B cell (primary cell): ENCODE measurements at regions of chr19 and their contacts with region 1.

Region 1: DNA sequence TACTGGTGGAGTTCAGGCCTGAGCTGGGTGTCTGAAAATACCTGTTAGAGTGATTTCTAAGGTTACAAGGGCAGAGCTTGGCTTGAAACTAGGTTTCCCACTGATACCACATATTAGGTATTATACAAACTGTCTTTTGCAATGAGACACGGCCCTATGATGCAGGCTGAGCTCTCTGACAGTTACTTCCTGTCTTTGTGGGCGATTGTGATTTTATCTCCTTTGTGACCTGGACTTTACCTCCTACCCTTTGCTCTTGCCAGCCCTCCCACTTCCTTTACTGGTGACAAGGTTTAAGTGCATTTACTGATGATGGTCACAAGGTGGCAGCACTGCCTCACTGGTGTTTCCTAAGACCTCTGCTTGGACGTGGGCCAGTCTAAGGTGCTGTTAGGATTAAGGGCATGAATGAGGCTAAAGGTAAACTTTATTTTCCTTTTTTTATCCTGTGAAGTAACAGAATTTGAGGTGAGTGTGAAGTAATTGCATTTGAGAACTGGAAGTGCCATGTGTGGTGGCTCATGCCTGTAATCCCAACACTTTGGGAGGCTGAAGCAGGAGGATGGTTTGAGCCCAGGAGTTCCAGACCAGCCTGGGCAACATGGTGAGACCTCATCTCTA is 7.7 kb upstream of the CXCL17 start:
- DNase-seq: peak; percentile 89
- ATAC-seq: peak; percentile 99
- H3K4me3 ChIP-seq: no peak overlapping the region
- H3K4me3 Mint-ChIP-seq: no peak overlapping the region
- H3K27ac ChIP-seq: no peak overlapping the region
- H3K27ac Mint-ChIP-seq: no peak overlapping the region
- H3K4me1 ChIP-seq: peaks cover 18 to 20% of the 10 kb centered on the region in 2 donors
- H3K4me1 Mint-ChIP-seq: peaks cover 12% of the 10 kb centered on the region
- H3K27me3 ChIP-seq: peaks cover 0 to 3% (median 0%) of the 10 kb centered on the region in 4 experiments
- H3K27me3 Mint-ChIP-seq: peaks cover 6% of the 10 kb centered on the region
- CTCF ChIP-seq: peak; percentile 95

Region 2: DNA sequence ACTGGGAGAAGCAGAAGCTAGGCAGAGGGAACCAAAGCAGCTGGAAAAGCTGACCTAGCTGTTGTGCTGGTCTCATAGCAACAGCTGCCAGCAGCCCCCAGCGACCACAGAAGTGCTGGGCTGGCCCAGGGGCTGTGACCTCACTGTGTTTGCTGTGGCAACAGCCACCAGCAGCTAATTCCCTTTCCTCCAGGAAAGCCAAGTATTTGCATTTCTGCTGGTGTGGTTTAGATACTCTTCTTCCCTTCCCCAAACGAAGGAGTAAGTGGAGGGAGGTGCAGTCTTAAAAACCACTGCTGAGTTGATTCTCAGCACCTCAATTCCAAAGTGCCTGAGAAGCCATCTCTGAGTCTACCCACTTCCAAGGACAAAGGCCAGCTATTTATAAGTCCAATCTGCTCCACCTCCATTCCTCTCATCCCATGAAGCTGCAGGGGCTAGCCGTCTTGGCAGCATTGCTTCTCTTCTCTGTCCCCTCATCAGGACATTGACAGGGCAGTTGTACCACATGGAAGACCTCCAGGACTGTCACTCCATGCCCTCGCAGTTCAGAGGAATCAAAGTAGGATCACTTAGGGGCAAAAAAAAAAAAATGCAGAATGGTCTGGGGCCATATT is 1152.0 kb before region 1 on chr19:
- CTCF ChIA-PET with region 1: no interaction called
- POLR2A ChIA-PET with region 1: no interaction called
- intact Hi-C with region 1: no loop called
- DNase-seq: peak; percentile 85
- ATAC-seq: peak; percentile 25
- H3K4me3 ChIP-seq: no peak overlapping the region
- H3K4me3 Mint-ChIP-seq: peak overlapping the region; percentile 86
- H3K27ac ChIP-seq: peak overlapping the region; percentile 83 to 100
- H3K27ac Mint-ChIP-seq: peak overlapping the region; percentile 98
- H3K4me1 ChIP-seq: peaks cover 58 to 65% of the 10 kb centered on the region in 2 donors
- H3K4me1 Mint-ChIP-seq: peaks cover 71% of the 10 kb centered on the region
- H3K27me3 ChIP-seq: no peaks in the 10 kb centered on the region
- H3K27me3 Mint-ChIP-seq: no peaks in the 10 kb centered on the region
- CTCF ChIP-seq: no peak

Region 3: DNA sequence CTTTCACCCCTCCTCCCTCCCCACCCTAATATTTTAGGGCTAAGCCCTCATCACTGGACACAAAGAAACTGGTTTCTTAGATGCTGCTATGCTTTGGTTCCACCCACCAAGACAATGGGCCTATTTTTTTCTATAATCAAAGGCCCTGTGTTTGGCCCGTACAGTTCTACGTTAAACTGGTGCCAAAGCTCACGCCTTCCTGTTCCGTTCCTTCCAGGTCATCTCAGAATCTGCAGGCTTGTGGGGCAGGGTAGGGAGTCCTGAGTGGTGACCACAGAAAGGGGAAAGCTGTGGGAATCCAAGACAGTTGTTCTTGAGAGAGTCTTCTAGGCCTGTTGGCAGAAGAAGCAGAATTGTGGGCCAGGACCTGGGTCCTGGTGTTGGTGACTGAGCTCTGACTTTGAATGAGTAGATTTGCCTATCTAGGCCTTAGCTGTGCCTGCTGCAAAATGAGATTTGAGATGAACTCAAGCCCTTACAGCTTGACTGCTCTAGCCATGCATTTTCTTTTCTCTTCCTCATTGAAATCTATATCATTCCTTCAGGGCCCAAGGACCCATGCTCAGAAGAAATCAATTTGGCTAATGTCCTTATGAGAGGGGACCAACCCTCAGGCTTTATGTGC is 11.4 kb after region 1 on chr19:
- CTCF ChIA-PET with region 1: interaction called, 57 read pairs
- POLR2A ChIA-PET with region 1: no interaction called
- intact Hi-C with region 1: loop called (anchors 1 kb)
- DNase-seq: no peak
- ATAC-seq: no peak
- H3K4me3 ChIP-seq: no peak overlapping the region
- H3K4me3 Mint-ChIP-seq: no peak overlapping the region
- H3K27ac ChIP-seq: no peak overlapping the region
- H3K27ac Mint-ChIP-seq: peak overlapping the region; percentile 42
- H3K4me1 ChIP-seq: peaks cover 38 to 43% of the 10 kb centered on the region in 2 donors
- H3K4me1 Mint-ChIP-seq: peaks cover 45% of the 10 kb centered on the region
- H3K27me3 ChIP-seq: no peaks in the 10 kb centered on the region
- H3K27me3 Mint-ChIP-seq: no peaks in the 10 kb centered on the region
- CTCF ChIP-seq: no peak

Region 4: GRCh38 chr19:42497492-42498168 is 47.2 kb after region 1 on chr19:
- CTCF ChIA-PET with region 1: interaction called, 6 read pairs
- POLR2A ChIA-PET with region 1: no interaction called
- intact Hi-C with region 1: loop called (anchors 5 kb)
- DNase-seq: peak; percentile 68
- ATAC-seq: peak; percentile 73
- H3K4me3 ChIP-seq: peak overlapping the region in 1 of 5 experiments; percentile 18
- H3K4me3 Mint-ChIP-seq: peak overlapping the region; percentile 40
- H3K27ac ChIP-seq: peak overlapping the region; percentile 56 to 77
- H3K27ac Mint-ChIP-seq: peak overlapping the region; percentile 93
- H3K4me1 ChIP-seq: peaks cover 27% of the 10 kb centered on the region in 2 donors
- H3K4me1 Mint-ChIP-seq: peaks cover 30% of the 10 kb centered on the region
- H3K27me3 ChIP-seq: no peaks in the 10 kb centered on the region
- H3K27me3 Mint-ChIP-seq: no peaks in the 10 kb centered on the region
- CTCF ChIP-seq: no peak

Region 5: GRCh38 chr19:42540071-42540553 is 89.7 kb after region 1 on chr19:
- CTCF ChIA-PET with region 1: interaction called, 10 read pairs
- POLR2A ChIA-PET with region 1: no interaction called
- intact Hi-C with region 1: no loop called
- DNase-seq: no peak
- ATAC-seq: no peak
- H3K4me3 ChIP-seq: no peak overlapping the region
- H3K4me3 Mint-ChIP-seq: no peak overlapping the region
- H3K27ac ChIP-seq: no peak overlapping the region
- H3K27ac Mint-ChIP-seq: no peak overlapping the region
- H3K4me1 ChIP-seq: no peaks in the 10 kb centered on the region
- H3K4me1 Mint-ChIP-seq: no peaks in the 10 kb centered on the region
- H3K27me3 ChIP-seq: peaks cover 0 to 4% (median 0%) of the 10 kb centered on the region in 4 experiments
- H3K27me3 Mint-ChIP-seq: peaks cover 3% of the 10 kb centered on the region
- CTCF ChIP-seq: no peak

Region 6: GRCh38 chr19:42596391-42597072 is 146.1 kb after region 1 on chr19:
- CTCF ChIA-PET with region 1: interaction called, 18 read pairs
- POLR2A ChIA-PET with region 1: no interaction called
- intact Hi-C with region 1: loop called (anchors 1 kb)
- DNase-seq: peak; percentile 69
- ATAC-seq: peak; percentile 47
- H3K4me3 ChIP-seq: no peak overlapping the region
- H3K4me3 Mint-ChIP-seq: no peak overlapping the region
- H3K27ac ChIP-seq: no peak overlapping the region
- H3K27ac Mint-ChIP-seq: no peak overlapping the region
- H3K4me1 ChIP-seq: peaks cover 3 to 7% of the 10 kb centered on the region in 2 donors
- H3K4me1 Mint-ChIP-seq: peaks cover 5% of the 10 kb centered on the region
- H3K27me3 ChIP-seq: peaks cover 0 to 17% (median 4%) of the 10 kb centered on the region in 4 experiments
- H3K27me3 Mint-ChIP-seq: peaks cover 22% of the 10 kb centered on the region
- CTCF ChIP-seq: peak; percentile 99